Endothelial cell of umbilical vein (primary cell): ENCODE measurements at regions of chr1 and their contacts with region 1.

Region 1: GRCh38 chr1:88180449-88181108 is 503.5 kb upstream of the PKN2 start:
- DNase-seq: peak; percentile 82
- H3K4me3 ChIP-seq: no peak overlapping the region
- H3K27ac ChIP-seq: no peak overlapping the region
- H3K4me1 ChIP-seq: peaks cover 6% of the 10 kb centered on the region
- H3K27me3 ChIP-seq: peaks cover 0 to 6% of the 10 kb centered on the region in 2 experiments
- CTCF ChIP-seq: peak; percentile 94 to 96
- POLR2A ChIP-seq: no peak

Region 2: DNA sequence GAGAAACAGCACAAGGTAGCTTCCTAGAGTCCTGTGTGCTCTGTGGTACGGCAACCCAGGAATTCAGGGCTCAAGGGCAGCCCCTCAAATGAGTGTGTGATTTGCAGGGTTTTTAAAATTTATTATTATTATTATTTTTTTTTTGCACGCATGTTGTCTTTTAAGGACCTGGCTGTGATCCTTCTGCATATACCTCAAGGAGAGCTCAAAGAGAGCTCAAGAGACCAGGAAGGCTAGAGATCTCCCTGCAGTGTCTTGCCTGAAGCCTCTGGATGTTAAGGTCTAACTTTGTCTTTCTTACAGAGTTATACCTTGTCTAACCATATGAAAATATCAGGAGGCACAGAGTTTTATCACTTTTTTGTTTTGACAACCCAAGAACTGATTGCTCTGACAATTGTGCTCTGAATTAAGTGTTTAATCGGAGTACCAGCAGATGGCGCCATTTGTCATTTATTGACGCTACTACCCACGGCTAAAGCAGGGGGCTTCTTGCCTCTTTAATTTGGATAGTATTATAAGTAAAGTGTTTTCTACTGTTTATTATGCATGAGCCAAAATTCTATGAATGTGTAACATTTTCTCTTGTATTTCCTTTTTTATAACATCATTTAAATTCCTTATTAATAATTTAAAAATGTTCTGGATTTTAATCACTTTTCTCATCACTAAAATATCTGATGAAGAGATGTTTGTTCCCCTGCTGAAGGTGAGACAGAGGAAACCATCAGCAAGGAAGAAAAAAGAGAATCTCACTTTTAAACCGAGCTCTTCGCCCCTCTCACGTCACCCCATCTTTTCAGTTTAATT is 887.7 kb before region 1 on chr1:
- CTCF ChIA-PET with region 1: interaction called, 3 read pairs
- POLR2A ChIA-PET with region 1: no interaction called
- dilution Hi-C with region 1: no loop called
- intact Hi-C with region 1: loop called (anchors 10 kb)
- DNase-seq: peak; percentile 66
- H3K4me3 ChIP-seq: no peak overlapping the region
- H3K27ac ChIP-seq: no peak overlapping the region
- H3K4me1 ChIP-seq: no peaks in the 10 kb centered on the region
- H3K27me3 ChIP-seq: peaks cover 0 to 7% of the 10 kb centered on the region in 2 experiments
- CTCF ChIP-seq: peak; percentile 40 to 67
- POLR2A ChIP-seq: no peak

Region 3: DNA sequence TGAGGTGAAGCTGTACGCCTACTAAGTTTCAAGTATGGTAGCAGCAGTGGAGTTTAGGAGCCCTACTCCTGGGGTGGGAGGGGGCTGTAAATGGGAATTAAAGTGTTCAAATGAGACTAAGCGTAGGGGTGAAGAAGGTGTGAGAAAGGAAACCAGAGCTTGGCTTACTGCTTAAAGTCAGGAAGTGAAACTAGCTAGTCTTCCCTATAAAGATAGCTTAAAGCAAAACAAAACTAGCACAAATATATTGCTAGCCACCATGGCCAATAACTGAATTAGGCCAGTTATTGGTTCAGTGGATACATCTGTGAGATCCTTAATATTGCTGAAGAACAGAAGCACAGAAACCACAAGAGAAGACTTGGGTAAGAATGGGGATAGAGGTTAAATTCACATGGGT is 11.3 kb after region 1 on chr1:
- CTCF ChIA-PET with region 1: interaction called, 43 read pairs
- POLR2A ChIA-PET with region 1: no interaction called
- dilution Hi-C with region 1: no loop called
- intact Hi-C with region 1: no loop called
- DNase-seq: no peak
- H3K4me3 ChIP-seq: no peak overlapping the region
- H3K27ac ChIP-seq: no peak overlapping the region
- H3K4me1 ChIP-seq: no peaks in the 10 kb centered on the region
- H3K27me3 ChIP-seq: peaks cover 0 to 3% of the 10 kb centered on the region in 2 experiments
- CTCF ChIP-seq: no peak
- POLR2A ChIP-seq: no peak

Region 4: DNA sequence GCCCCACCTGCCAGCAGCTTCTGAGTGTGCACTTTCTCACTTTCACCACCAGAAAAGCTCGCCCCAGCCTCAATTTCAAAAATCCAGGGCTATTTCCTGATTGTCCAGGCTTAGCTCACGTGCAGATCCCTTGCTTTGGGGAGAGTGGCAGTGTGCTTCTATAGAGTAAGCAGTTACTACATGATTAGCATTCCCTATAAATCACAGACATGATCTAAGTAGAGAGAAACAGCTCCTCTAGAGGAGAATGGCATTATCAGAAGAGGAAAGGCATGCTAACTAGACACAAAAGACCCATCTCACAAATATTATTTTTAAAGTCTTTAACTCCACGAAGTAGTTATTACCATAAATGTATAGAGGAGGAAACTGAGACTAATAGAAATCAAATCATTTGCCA is 47.6 kb after region 1 on chr1:
- CTCF ChIA-PET with region 1: interaction called, 15 read pairs
- POLR2A ChIA-PET with region 1: no interaction called
- dilution Hi-C with region 1: no loop called
- intact Hi-C with region 1: no loop called
- DNase-seq: no peak
- H3K4me3 ChIP-seq: no peak overlapping the region
- H3K27ac ChIP-seq: no peak overlapping the region
- H3K4me1 ChIP-seq: no peaks in the 10 kb centered on the region
- H3K27me3 ChIP-seq: no peaks in the 10 kb centered on the region
- CTCF ChIP-seq: no peak
- POLR2A ChIP-seq: no peak

Region 5: DNA sequence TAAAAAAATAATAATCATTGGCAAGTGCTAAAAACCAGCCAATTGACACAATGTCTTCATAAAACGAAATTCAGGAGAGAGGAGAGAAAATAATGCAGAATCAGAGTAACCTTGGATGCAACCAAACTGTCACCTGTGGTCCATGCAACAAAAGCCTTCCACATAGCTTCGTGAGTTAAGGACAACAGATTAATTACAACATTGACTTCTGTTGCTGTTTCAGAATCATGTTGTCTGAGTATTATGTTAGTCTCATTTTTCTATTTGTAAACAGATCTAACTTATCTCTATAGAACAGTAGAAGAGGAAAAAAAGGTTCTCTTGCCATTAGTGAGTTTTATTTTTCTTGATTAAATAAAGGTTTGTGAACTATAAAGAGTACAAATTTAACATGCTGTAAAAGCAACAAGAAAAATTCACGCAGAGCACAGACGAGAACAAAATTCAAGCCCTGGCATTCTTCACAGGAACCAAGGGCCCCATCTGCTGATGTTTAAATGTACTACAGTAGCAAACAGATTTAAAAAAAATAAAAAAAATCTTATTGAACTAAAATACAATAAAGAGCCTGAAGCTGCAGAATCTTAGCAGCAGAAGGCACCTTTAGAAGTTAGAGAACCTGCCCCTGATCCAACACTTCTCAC is 122.4 kb after region 1 on chr1:
- CTCF ChIA-PET with region 1: interaction called, 49 read pairs
- POLR2A ChIA-PET with region 1: no interaction called
- dilution Hi-C with region 1: no loop called
- intact Hi-C with region 1: loop called (anchors 1 kb)
- DNase-seq: peak; percentile 53
- H3K4me3 ChIP-seq: no peak overlapping the region
- H3K27ac ChIP-seq: no peak overlapping the region
- H3K4me1 ChIP-seq: no peaks in the 10 kb centered on the region
- H3K27me3 ChIP-seq: peaks cover 4 to 13% of the 10 kb centered on the region in 2 experiments
- CTCF ChIP-seq: peak; percentile 11 to 14
- POLR2A ChIP-seq: no peak

Region 6: DNA sequence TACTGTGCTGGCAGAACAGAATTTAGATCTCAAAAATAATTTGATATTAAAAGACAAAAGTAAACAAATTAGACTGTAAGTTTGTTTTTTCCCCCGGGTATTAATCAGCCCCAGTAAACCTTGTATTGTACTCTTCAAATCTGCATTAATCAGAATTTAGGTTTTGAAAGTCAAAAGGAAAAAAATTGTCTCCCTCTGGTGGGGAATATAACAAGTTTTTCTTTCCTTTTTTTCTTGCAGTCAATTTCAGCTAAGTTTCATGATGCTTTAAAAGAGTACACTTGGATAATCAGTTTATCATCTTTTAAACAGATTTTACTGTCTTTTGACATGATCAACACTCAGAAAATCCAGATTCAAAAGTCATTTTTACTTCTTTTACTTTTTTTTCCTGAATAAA is 369.0 kb after region 1 on chr1:
- CTCF ChIA-PET with region 1: interaction called, 80 read pairs
- POLR2A ChIA-PET with region 1: no interaction called
- dilution Hi-C with region 1: no loop called
- intact Hi-C with region 1: loop called (anchors 1 kb)
- DNase-seq: peak; percentile 10
- H3K4me3 ChIP-seq: no peak overlapping the region
- H3K27ac ChIP-seq: no peak overlapping the region
- H3K4me1 ChIP-seq: no peaks in the 10 kb centered on the region
- H3K27me3 ChIP-seq: peaks cover 0 to 3% of the 10 kb centered on the region in 2 experiments
- CTCF ChIP-seq: no peak
- POLR2A ChIP-seq: no peak

Region 7: GRCh38 chr1:88877382-88877825 is 696.8 kb after region 1 on chr1:
- CTCF ChIA-PET with region 1: interaction called, 12 read pairs
- POLR2A ChIA-PET with region 1: no interaction called
- dilution Hi-C with region 1: no loop called
- intact Hi-C with region 1: loop called (anchors 10 kb)
- DNase-seq: peak; percentile 46
- H3K4me3 ChIP-seq: no peak overlapping the region
- H3K27ac ChIP-seq: no peak overlapping the region
- H3K4me1 ChIP-seq: no peaks in the 10 kb centered on the region
- H3K27me3 ChIP-seq: no peaks in the 10 kb centered on the region
- CTCF ChIP-seq: peak; percentile 14 to 25
- POLR2A ChIP-seq: no peak